Heart right ventricle (tissue), 16 donors: ENCODE measurements at regions of chr22 and their contacts with region 1.

Region 1: DNA sequence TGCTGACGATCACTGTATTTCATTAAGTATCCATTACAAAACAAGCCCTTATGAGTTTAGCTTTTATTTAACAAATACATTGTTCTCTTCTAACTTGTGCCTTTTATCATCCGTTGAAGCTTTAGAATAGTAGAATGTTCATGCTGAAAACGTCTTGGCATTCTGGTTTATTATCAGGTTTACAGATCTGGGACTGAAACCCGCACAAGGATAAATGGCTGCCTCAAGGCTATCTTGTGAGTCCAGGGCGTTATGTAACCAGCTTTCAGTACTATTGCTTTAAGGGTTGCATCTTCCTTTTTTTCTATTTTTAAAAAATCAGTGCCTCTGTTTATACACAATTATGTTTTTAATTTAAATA is 66.6 kb upstream of the PRODH start:
- DNase-seq: no peak
- ATAC-seq: no peak
- H3K4me3 ChIP-seq: no peak overlapping the region
- H3K27ac ChIP-seq: no peak overlapping the region
- H3K4me1 ChIP-seq: no peaks in the 10 kb centered on the region
- H3K27me3 ChIP-seq: peaks cover 5 to 56% (median 27%) of the 10 kb centered on the region in 7 donors
- CTCF ChIP-seq: no peak

Region 2: GRCh38 chr22:18905540-18906409 is 96.9 kb before region 1 on chr22 and contains the start of gene DGCR6:
- intact Hi-C with region 1: no loop called
- DNase-seq: no peak
- ATAC-seq: peak; percentile 96 to 98 (median 97)
- H3K4me3 ChIP-seq: no peak within 1 kb of the TSS
- H3K27ac ChIP-seq: no peak within 1 kb of the TSS
- H3K4me1 ChIP-seq: no peaks in the 10 kb centered on the region
- H3K27me3 ChIP-seq: no peaks in the 10 kb centered on the region
- CTCF ChIP-seq: no peak
- total RNA-seq, gene DGCR6: 5.6 to 17.5 (median 8.0) TPM

Region 3: DNA sequence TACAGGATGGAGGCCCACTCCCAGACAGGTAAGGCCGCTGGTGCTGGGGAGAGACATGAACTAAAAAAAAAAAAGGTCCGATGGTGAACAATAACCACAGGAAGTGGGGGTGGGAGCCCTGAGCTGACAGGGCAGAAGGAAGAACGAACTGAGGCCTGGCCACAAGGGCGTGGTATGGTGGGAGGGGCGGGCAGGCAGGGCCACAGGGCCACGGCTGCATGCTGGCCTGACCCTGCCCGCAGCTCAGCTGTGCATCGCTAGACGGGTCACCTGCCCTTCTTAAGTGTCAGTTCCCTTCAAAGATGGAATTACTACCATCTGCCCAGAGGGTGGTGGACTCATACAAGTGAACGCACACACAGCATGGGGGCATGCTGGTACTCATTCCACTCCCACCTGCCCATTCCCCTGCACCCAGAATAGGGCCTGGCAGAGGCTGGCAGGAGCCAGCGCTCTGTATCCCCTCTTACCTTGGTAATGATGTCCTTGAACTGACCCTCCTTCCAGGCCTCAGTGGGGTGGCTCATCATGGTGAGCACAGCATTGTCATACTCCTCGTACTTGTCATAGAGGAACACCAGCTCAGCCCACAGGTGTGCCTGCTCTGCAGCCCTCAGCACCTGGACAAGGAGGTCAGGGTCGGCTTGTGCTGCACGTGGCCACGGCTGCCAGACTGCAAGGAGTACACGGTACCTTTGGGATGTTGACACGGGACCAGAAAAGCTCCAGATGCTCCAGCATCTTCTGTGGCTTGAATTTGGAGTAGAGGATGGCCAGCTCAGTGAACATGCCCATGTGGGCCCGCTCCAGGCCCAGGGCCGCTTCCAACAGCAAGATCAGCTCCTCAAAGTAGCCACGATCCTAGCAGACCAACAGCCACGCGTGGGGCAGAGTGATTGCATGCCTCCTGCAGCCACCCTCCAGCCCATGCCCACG is 193.4 kb after region 1 on chr22:
- intact Hi-C with region 1: loop called in 1 of 10 experiments (anchors 10 kb)
- DNase-seq: no peak
- ATAC-seq: no peak
- H3K4me3 ChIP-seq: no peak overlapping the region
- H3K27ac ChIP-seq: no peak overlapping the region
- H3K4me1 ChIP-seq: no peaks in the 10 kb centered on the region
- H3K27me3 ChIP-seq: no peaks in the 10 kb centered on the region
- CTCF ChIP-seq: no peak

Region 4: DNA sequence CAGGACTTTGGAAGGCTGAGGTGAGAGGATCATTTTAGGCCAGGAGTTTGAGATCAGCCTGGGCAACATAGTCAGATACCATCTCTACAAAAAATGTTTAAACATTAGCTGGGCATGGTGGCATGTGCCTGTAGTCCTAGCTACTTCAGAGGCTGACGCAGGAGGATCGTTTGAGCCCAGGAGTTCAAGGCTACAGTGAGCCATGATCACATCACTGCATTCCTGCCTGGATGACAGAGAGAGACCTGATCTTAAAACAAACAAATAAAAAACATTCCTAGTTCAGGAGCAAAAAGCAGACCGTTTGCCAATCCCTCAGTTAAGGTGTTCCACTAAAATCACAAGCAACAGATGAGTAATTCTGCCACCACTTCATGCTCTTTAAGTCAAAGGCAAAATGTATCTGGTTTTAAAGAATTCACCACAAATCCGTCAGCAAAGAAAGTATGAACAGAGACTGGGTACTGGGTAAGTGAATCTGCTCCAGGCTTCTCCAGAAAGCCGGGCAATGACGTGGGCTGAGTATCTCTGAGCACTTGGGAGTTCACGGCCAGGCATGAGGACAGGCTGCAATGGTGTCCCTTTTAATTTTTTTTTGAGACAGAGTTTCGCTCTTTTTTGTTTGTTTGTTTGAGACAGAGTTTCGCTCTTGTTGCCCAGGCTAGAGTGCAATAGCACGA is 269.3 kb after region 1 on chr22:
- intact Hi-C with region 1: no loop called
- DNase-seq: no peak
- ATAC-seq: no peak
- H3K4me3 ChIP-seq: no peak overlapping the region
- H3K27ac ChIP-seq: no peak overlapping the region
- H3K4me1 ChIP-seq: peaks cover 0 to 19% (median 6%) of the 10 kb centered on the region in 9 donors
- H3K27me3 ChIP-seq: no peaks in the 10 kb centered on the region
- CTCF ChIP-seq: no peak